BJ (cell line): ENCODE measurements at regions of chr2 and their contacts with region 1.

Region 1: GRCh38 chr2:109545828-109546713 is 67.7 kb downstream of the SEPTIN10 start:
- DNase-seq: no peak
- H3K4me3 ChIP-seq: no peak overlapping the region
- H3K27me3 ChIP-seq: no peaks in the 10 kb centered on the region
- CTCF ChIP-seq: peak; percentile 95

Region 2: GRCh38 chr2:109535217-109535946 is 10.7 kb before region 1 on chr2:
- CTCF ChIA-PET with region 1: interaction called, 27 read pairs
- POLR2A ChIA-PET with region 1: no interaction called
- DNase-seq: no peak
- H3K4me3 ChIP-seq: no peak overlapping the region
- H3K27me3 ChIP-seq: peaks cover 5% of the 10 kb centered on the region
- CTCF ChIP-seq: no peak

Region 3: GRCh38 chr2:109604597-109604996 is 58.5 kb after region 1 on chr2:
- CTCF ChIA-PET with region 1: interaction called, 11 read pairs
- POLR2A ChIA-PET with region 1: interaction called, 4 read pairs
- DNase-seq: no peak
- H3K4me3 ChIP-seq: no peak overlapping the region
- H3K27me3 ChIP-seq: no peaks in the 10 kb centered on the region
- CTCF ChIP-seq: no peak

Region 4: GRCh38 chr2:109613922-109614714 is 68.0 kb after region 1 on chr2 and contains the starts of genes SEPTIN10 and SOWAHC:
- CTCF ChIA-PET with region 1: interaction called, 17 read pairs
- POLR2A ChIA-PET with region 1: no interaction called
- DNase-seq: peak; percentile 96
- H3K4me3 ChIP-seq: peak within 1 kb of the TSS; percentile 81
- H3K27me3 ChIP-seq: no peaks in the 10 kb centered on the region
- CTCF ChIP-seq: no peak
- polyA plus RNA-seq, gene SEPTIN10: 68.8 and 93.2 TPM in 2 replicates
- polyA plus RNA-seq, gene SOWAHC: 5.2 and 9.1 TPM in 2 replicates

Region 5: DNA sequence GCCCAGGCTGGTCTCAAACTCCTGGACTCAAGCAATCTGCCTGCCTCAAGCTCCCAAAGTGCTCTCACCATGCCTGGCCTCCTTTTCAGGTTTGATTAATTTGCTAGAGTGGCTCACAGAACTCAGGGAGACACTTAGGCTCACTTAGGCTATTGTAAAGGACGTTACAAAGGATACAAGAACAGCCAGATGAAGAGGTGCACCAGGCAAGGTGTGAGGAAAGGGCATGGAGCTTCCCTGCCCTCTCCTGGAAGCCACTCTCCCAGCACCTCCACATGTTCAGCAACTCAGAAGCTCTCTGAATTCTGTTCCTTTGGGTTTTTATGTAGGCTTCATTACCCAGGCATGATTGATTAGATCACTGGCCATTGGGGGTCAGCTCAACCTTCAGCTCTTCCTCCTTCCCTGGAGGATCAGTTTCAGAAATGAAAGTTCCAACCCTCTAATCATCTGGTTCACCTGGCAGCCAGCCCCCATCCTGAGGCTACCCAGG is 169.3 kb after region 1 on chr2:
- CTCF ChIA-PET with region 1: interaction called, 23 read pairs
- POLR2A ChIA-PET with region 1: no interaction called
- DNase-seq: no peak
- H3K4me3 ChIP-seq: no peak overlapping the region
- H3K27me3 ChIP-seq: no peaks in the 10 kb centered on the region
- CTCF ChIP-seq: peak; percentile 41

Region 6: GRCh38 chr2:109727929-109728447 is 181.9 kb after region 1 on chr2:
- CTCF ChIA-PET with region 1: interaction called, 92 read pairs
- POLR2A ChIA-PET with region 1: no interaction called
- DNase-seq: no peak
- H3K4me3 ChIP-seq: no peak overlapping the region
- H3K27me3 ChIP-seq: peaks cover 7% of the 10 kb centered on the region
- CTCF ChIP-seq: no peak

Region 7: DNA sequence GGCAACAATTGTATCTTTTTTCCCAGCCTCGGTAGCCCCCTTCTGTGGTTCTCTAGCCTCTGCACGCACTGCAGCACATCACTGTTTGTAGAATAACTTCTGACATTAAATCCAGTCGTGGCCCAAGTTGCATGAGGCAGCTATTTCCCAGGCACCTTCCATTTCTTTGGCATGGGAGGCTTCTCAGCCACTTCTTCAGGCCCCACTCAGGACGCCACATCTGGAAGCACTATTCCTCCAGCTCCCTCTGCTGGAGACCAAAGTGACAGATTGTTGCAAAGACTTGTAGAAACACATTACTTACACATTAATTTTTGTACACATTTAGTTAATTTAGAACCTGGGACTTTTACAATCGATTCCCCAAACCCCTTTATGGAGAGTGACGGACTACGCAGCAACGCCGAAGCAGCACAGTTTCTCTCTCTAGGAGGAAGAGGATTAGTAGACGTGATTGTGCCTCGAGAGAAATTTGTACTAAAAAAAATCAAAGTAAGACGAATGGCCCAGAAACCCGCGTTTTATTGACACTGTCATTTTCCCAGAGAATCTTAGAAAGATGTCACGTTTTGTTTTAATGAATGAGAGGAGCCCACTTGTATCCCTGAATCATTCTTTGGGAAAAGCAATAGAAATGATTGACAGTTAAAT is 190.2 kb after region 1 on chr2:
- CTCF ChIA-PET with region 1: interaction called, 92 read pairs
- POLR2A ChIA-PET with region 1: interaction called, 9 read pairs
- DNase-seq: peak; percentile 23
- H3K4me3 ChIP-seq: no peak overlapping the region
- H3K27me3 ChIP-seq: no peaks in the 10 kb centered on the region
- CTCF ChIP-seq: peak; percentile 75